ENCODE measurements at regions of chr11 and their contacts with region 1.

Region 1: DNA sequence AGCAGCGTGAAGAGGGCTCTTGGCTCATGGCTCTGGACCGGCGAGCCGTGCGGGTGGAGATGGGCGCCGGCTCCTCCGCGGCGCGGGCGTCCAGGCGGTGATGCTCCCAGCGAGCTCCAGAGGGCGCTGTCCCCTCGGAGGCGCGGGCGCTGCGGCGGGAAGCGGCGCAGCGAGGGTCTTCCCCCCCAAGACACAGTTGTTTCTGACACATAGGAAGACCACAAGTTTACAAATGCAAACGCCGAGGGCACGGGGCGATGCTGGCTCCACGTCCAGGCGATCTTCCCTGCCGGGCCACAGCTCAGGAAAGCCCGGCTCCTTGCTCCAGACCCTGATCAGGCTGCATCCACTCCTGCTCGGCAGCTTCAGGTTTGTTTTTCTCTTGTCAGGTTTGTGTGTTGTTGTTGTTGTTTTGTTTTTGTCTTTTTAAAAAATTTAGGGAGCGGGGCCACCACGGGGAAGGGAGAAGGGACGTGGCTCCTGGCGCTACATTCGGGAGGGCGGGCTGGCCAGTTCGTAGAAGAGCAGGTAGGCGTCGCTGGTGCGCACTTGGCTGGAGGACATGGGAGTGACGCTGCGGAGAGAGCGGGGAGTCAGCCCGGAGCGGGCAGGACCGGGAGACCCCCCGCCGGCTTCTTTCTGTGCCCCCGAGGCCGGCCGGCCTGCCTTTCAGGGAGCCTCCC is 10.0 kb upstream of the MFRP start:
- DNase-seq: peak; percentile 83
- H3K4me3 Mint-ChIP-seq: peak overlapping the region; percentile 74
- H3K27ac Mint-ChIP-seq: no peak overlapping the region
- H3K4me1 Mint-ChIP-seq: peaks cover 15% of the 10 kb centered on the region
- H3K27me3 Mint-ChIP-seq: peaks cover 24% of the 10 kb centered on the region

Region 2: GRCh38 chr11:119339589-119340343 is 16.7 kb before region 1 on chr11:
- CTCF ChIA-PET with region 1: interaction called, 38 read pairs
- POLR2A ChIA-PET with region 1: no interaction called
- intact Hi-C with region 1: loop called (anchors 2 kb)
- DNase-seq: peak; percentile 48
- H3K4me3 Mint-ChIP-seq: no peak overlapping the region
- H3K27ac Mint-ChIP-seq: no peak overlapping the region
- H3K4me1 Mint-ChIP-seq: peaks cover 23% of the 10 kb centered on the region
- H3K27me3 Mint-ChIP-seq: peaks cover 31% of the 10 kb centered on the region

Region 3: DNA sequence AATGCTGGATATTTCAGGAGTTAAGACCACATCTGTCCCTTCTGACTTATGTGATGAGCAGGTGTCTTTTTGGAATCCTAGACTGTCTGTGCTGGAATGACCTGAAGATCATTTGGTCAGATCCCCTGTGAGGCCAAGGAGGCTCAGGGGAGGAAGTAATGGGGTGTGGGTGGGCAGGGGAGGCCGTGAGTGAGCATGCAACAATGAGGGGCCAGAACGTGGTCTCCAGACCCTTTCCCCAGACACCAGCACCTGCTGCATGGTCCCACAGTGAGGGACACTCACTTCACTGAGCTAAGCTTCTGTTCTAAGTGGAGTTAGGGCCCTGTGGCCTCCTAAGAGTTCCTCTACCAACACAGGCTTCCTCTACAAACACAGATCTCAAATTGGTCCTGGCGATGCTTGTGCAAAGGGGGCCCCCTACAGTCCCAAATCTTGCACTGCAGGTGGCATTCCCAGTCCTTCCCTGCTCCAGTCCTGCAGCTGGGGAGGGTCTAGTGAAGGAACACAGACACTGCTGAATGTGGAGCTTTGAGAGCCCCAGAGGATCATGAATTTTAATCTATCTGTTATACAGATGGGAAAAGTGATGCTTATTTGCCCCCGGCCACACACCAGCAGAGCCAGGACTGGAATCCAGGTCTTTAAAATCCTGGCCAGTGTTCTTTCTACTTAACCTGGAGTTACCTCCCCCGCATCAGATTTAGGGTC is 17.6 kb after region 1 on chr11:
- CTCF ChIA-PET with region 1: interaction called, 237 read pairs
- POLR2A ChIA-PET with region 1: no interaction called
- intact Hi-C with region 1: loop called (anchors 1 kb)
- DNase-seq: peak; percentile 73
- H3K4me3 Mint-ChIP-seq: no peak overlapping the region
- H3K27ac Mint-ChIP-seq: no peak overlapping the region
- H3K4me1 Mint-ChIP-seq: peaks cover 8% of the 10 kb centered on the region
- H3K27me3 Mint-ChIP-seq: peaks cover 1% of the 10 kb centered on the region

Region 4: GRCh38 chr11:119381181-119381988 is 24.9 kb after region 1 on chr11 and contains the start of gene USP2:
- CTCF ChIA-PET with region 1: interaction called, 237 read pairs
- POLR2A ChIA-PET with region 1: interaction called, 3 read pairs
- intact Hi-C with region 1: loop called (anchors 1 kb)
- DNase-seq: peak; percentile 98
- H3K4me3 Mint-ChIP-seq: no peak within 1 kb of the TSS
- H3K27ac Mint-ChIP-seq: peak within 1 kb of the TSS; percentile 2
- H3K4me1 Mint-ChIP-seq: peaks cover 10% of the 10 kb centered on the region
- H3K27me3 Mint-ChIP-seq: no peaks in the 10 kb centered on the region
- total RNA-seq, gene USP2: 1.4 to 2.2 TPM

Region 5: GRCh38 chr11:119432484-119433357 is 76.2 kb after region 1 on chr11:
- CTCF ChIA-PET with region 1: interaction called, 10 read pairs
- POLR2A ChIA-PET with region 1: no interaction called
- intact Hi-C with region 1: no loop called
- DNase-seq: no peak
- H3K4me3 Mint-ChIP-seq: no peak overlapping the region
- H3K27ac Mint-ChIP-seq: no peak overlapping the region
- H3K4me1 Mint-ChIP-seq: peaks cover 2% of the 10 kb centered on the region
- H3K27me3 Mint-ChIP-seq: peaks cover 27% of the 10 kb centered on the region

Region 6: GRCh38 chr11:119441898-119442243 is 85.4 kb after region 1 on chr11:
- CTCF ChIA-PET with region 1: interaction called, 11 read pairs
- POLR2A ChIA-PET with region 1: no interaction called
- intact Hi-C with region 1: no loop called
- DNase-seq: no peak
- H3K4me3 Mint-ChIP-seq: no peak overlapping the region
- H3K27ac Mint-ChIP-seq: no peak overlapping the region
- H3K4me1 Mint-ChIP-seq: peaks cover 12% of the 10 kb centered on the region
- H3K27me3 Mint-ChIP-seq: peaks cover 31% of the 10 kb centered on the region

Region 7: GRCh38 chr11:119474682-119475596 is 118.4 kb after region 1 on chr11:
- CTCF ChIA-PET with region 1: interaction called, 131 read pairs
- POLR2A ChIA-PET with region 1: no interaction called
- intact Hi-C with region 1: loop called (anchors 1 kb)
- DNase-seq: peak; percentile 72
- H3K4me3 Mint-ChIP-seq: no peak overlapping the region
- H3K27ac Mint-ChIP-seq: no peak overlapping the region
- H3K4me1 Mint-ChIP-seq: no peaks in the 10 kb centered on the region
- H3K27me3 Mint-ChIP-seq: peaks cover 14% of the 10 kb centered on the region

Region 8: DNA sequence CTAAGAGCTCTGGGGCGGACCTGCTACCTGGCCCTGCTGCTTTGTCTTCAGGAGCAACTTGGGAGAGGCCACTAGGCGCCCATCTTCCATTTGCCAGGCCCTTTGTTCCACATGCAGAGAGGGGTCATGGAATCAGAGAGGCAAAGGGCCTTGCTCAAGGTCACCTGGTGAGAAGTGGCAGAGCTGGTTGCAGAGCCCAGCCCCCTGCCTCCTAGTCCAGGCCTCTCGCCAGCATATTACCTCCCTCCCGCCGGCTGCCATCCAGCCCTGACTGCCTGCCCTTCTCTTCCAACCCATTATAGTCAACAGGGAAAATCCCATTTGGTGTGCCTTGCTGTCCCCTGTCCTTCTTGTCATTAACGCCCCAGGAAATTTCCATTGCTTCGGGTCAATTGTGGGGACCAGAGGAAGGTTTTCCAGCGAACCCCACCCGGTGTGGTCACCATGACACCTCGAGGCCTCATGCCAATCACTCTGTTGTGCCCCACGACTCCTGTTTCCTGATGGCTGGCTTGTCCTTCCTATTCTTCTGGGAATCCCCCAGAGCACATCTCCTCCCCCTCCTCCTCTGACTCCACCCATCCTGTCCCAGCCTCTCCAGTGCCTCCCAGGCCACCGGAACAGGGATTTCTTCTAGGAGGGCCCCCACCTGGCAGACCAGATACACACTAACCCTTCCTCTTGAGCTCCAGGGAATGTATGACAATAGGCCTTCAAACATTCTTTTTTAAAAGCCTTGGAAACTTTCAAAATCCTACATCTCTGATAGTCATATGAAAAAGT is 295.5 kb after region 1 on chr11:
- CTCF ChIA-PET with region 1: no interaction called
- POLR2A ChIA-PET with region 1: no interaction called
- intact Hi-C with region 1: no loop called
- DNase-seq: no peak
- H3K4me3 Mint-ChIP-seq: no peak overlapping the region
- H3K27ac Mint-ChIP-seq: no peak overlapping the region
- H3K4me1 Mint-ChIP-seq: no peaks in the 10 kb centered on the region
- H3K27me3 Mint-ChIP-seq: no peaks in the 10 kb centered on the region